Naive thymus-derived CD4-positive, alpha-beta T cell (primary cell): ENCODE measurements at regions of chr16 and their contacts with region 1.

Region 1: DNA sequence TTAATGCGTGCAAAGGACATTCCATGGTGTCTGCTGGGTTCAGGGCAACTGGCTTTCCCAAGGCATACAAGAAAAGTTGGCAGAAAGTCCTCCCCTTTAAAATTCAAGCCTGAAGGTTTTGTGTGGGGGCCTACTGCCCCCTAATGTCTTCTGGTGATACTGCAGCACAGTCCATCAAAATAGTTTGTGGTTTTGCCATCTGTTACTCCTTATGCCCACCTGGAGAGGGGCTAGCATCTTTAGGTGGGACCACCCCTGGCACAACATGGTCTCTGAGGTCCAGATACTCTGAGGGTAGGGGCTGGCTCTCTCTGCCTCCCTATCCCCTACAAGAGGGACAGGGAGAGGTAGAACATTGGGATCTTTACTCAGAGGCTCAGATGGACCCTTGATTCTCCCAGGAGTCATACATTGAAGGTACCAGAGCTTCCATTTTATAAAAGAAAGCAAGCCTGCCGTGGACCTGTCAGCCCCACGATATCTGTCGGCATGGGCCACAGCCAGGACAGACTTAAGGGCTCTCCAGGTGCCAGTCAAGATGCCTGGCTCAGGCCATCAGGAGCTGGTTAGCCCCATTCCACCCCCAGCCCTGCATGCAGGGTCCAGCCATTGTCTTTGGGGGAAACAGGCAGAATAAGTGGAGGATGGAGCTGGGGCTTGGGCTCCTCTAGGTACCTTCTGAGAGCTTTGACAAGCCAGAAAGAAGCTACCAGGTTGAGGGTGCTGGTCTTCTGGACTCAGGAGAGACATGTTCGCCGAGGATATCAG is 6.3 kb downstream of the ESRP2 start:
- DNase-seq: peak in 6 of 9 donors; percentile 44 to 64 (median 58)
- ATAC-seq: peak; percentile 61
- H3K4me3 ChIP-seq: no peak overlapping the region
- H3K4me3 Mint-ChIP-seq: peak overlapping the region in 1 of 10 donors; percentile 29
- H3K27ac ChIP-seq: no peak overlapping the region
- H3K27ac Mint-ChIP-seq: peak overlapping the region; percentile 63 to 90 (median 77)
- H3K4me1 ChIP-seq: peaks cover 0 to 21% of the 10 kb centered on the region in 2 donors
- H3K4me1 Mint-ChIP-seq: peaks cover 18 to 53% (median 47%) of the 10 kb centered on the region in 7 donors
- H3K27me3 ChIP-seq: no peaks in the 10 kb centered on the region
- H3K27me3 Mint-ChIP-seq: no peaks in the 10 kb centered on the region

Region 2: DNA sequence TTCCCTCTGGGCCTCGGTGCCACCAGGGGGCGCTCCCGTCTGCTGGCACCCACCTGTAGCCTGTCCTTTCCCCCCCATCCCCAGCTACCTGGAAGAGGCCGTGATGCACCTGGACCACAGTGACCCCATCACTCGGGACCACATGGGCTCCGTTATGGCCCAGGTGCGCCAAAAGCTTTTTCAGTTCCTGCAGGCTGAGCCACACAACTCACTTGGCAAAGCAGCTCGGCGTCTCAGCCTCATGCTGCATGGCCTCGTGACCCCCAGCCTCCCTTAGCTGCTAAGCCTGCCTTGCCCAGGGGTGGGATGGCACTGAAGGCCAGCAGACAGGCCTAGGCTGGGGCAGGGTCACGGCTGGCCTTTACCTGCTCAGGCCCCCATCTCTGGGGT is 345.7 kb before region 1 on chr16:
- CTCF ChIA-PET with region 1: interaction called, 6 read pairs
- POLR2A ChIA-PET with region 1: no interaction called
- intact Hi-C with region 1: loop called in 1 of 2 experiments (anchors 1 kb)
- DNase-seq: peak; percentile 62 to 83 (median 74)
- ATAC-seq: peak; percentile 84
- H3K4me3 ChIP-seq: no peak overlapping the region
- H3K4me3 Mint-ChIP-seq: no peak overlapping the region
- H3K27ac ChIP-seq: no peak overlapping the region
- H3K27ac Mint-ChIP-seq: peak overlapping the region in 4 of 9 donors; percentile 19 to 42 (median 36)
- H3K4me1 ChIP-seq: no peaks in the 10 kb centered on the region
- H3K4me1 Mint-ChIP-seq: peaks cover 0 to 6% (median 0%) of the 10 kb centered on the region in 7 donors
- H3K27me3 ChIP-seq: no peaks in the 10 kb centered on the region
- H3K27me3 Mint-ChIP-seq: no peaks in the 10 kb centered on the region

Region 3: GRCh38 chr16:68074850-68075555 is 154.6 kb before region 1 on chr16:
- CTCF ChIA-PET with region 1: interaction called, 5 read pairs
- POLR2A ChIA-PET with region 1: no interaction called
- intact Hi-C with region 1: loop called in 1 of 2 experiments (anchors 1 kb)
- DNase-seq: peak in 2 of 9 donors; percentile 27 to 67
- ATAC-seq: peak; percentile 77
- H3K4me3 ChIP-seq: peak overlapping the region; percentile 9
- H3K4me3 Mint-ChIP-seq: peak overlapping the region; percentile 32 to 79 (median 53)
- H3K27ac ChIP-seq: no peak overlapping the region
- H3K27ac Mint-ChIP-seq: peak overlapping the region; percentile 14 to 90 (median 76)
- H3K4me1 ChIP-seq: peaks cover 75 to 88% of the 10 kb centered on the region in 2 donors
- H3K4me1 Mint-ChIP-seq: peaks cover 69 to 89% (median 86%) of the 10 kb centered on the region in 7 donors
- H3K27me3 ChIP-seq: no peaks in the 10 kb centered on the region
- H3K27me3 Mint-ChIP-seq: no peaks in the 10 kb centered on the region

Region 4: DNA sequence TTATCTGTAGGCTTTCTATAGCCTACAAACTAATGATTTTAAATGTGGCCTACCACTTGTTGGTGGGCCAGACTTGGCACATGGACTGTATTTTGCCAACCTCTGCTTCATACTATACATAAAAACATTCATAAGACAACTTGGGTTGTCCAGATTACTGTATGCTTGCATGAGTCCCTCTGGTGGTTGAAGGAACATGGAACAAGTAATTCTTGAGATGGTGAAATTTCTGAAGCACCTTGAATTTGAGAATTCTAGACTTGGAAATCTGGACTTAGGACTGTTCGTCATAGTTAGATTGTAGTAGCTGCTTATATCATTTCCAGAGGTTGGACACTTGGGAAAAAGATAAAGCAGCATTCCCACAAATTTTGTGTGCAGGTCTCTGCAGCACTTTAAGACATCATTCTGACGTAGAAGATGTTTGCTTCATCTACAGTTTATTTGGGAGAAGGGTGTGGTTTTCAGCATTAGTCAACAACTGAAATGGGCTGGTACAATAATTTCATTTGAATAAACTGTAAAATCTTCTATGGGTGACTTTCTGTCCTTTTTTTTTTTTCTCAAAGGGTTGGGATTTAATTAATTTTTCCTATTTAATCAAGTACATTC is 113.3 kb before region 1 on chr16:
- CTCF ChIA-PET with region 1: interaction called, 4 read pairs
- POLR2A ChIA-PET with region 1: no interaction called
- intact Hi-C with region 1: loop called in 1 of 2 experiments (anchors 1 kb)
- DNase-seq: peak in 7 of 9 donors; percentile 11 to 38 (median 19)
- ATAC-seq: peak; percentile 73
- H3K4me3 ChIP-seq: no peak overlapping the region
- H3K4me3 Mint-ChIP-seq: peak overlapping the region in 7 of 10 donors; percentile 3 to 60 (median 52)
- H3K27ac ChIP-seq: peak overlapping the region; percentile 11
- H3K27ac Mint-ChIP-seq: peak overlapping the region in 6 of 9 donors; percentile 28 to 77 (median 57)
- H3K4me1 ChIP-seq: peaks cover 36 to 50% of the 10 kb centered on the region in 2 donors
- H3K4me1 Mint-ChIP-seq: peaks cover 48 to 97% (median 82%) of the 10 kb centered on the region in 7 donors
- H3K27me3 ChIP-seq: no peaks in the 10 kb centered on the region
- H3K27me3 Mint-ChIP-seq: no peaks in the 10 kb centered on the region

Region 5: GRCh38 chr16:68214726-68215125 is 14.9 kb before region 1 on chr16:
- CTCF ChIA-PET with region 1: interaction called, 7 read pairs
- POLR2A ChIA-PET with region 1: interaction called, 5 read pairs
- intact Hi-C with region 1: loop called in 1 of 2 experiments (anchors 1 kb)
- DNase-seq: no peak
- ATAC-seq: no peak
- H3K4me3 ChIP-seq: no peak overlapping the region
- H3K4me3 Mint-ChIP-seq: no peak overlapping the region
- H3K27ac ChIP-seq: peak overlapping the region; percentile 17
- H3K27ac Mint-ChIP-seq: peak overlapping the region; percentile 56 to 97 (median 79)
- H3K4me1 ChIP-seq: peaks cover 0 to 22% of the 10 kb centered on the region in 2 donors
- H3K4me1 Mint-ChIP-seq: peaks cover 31 to 66% (median 53%) of the 10 kb centered on the region in 7 donors
- H3K27me3 ChIP-seq: no peaks in the 10 kb centered on the region
- H3K27me3 Mint-ChIP-seq: no peaks in the 10 kb centered on the region